T-cell (primary cell): ENCODE measurements at regions of chr7 and their contacts with region 1.

Region 1: GRCh38 chr7:29318853-29319718 is 124.5 kb downstream of the CHN2 start:
- DNase-seq: no peak
- ATAC-seq: no peak
- H3K4me3 ChIP-seq: no peak overlapping the region
- H3K4me3 Mint-ChIP-seq: no peak overlapping the region
- H3K27ac ChIP-seq: no peak overlapping the region
- H3K27ac Mint-ChIP-seq: no peak overlapping the region
- H3K4me1 ChIP-seq: no peaks in the 10 kb centered on the region
- H3K4me1 Mint-ChIP-seq: no peaks in the 10 kb centered on the region
- H3K27me3 ChIP-seq: no peaks in the 10 kb centered on the region
- H3K27me3 Mint-ChIP-seq: no peaks in the 10 kb centered on the region

Region 2: GRCh38 chr7:29105752-29106668 is 213.1 kb before region 1 on chr7:
- CTCF ChIA-PET with region 1: no interaction called
- POLR2A ChIA-PET with region 1: no interaction called
- DNase-seq: peak in 4 of 35 experiments; percentile 1 to 40 (median 14)
- ATAC-seq: peak in 2 of 4 experiments; percentile 46 to 64
- H3K4me3 ChIP-seq: no peak overlapping the region
- H3K4me3 Mint-ChIP-seq: no peak overlapping the region
- H3K27ac ChIP-seq: no peak overlapping the region
- H3K27ac Mint-ChIP-seq: no peak overlapping the region
- H3K4me1 ChIP-seq: no peaks in the 10 kb centered on the region
- H3K4me1 Mint-ChIP-seq: peaks cover 0 to 5% (median 2%) of the 10 kb centered on the region in 3 donors
- H3K27me3 ChIP-seq: no peaks in the 10 kb centered on the region
- H3K27me3 Mint-ChIP-seq: peaks cover 1 to 13% of the 10 kb centered on the region in 2 donors

Region 3: GRCh38 chr7:29337546-29338116 is 18.5 kb after region 1 on chr7:
- CTCF ChIA-PET with region 1: interaction called in 1 of 2 experiments, 16 read pairs
- POLR2A ChIA-PET with region 1: no interaction called
- DNase-seq: peak in 34 of 35 experiments; percentile 7 to 73 (median 41)
- ATAC-seq: peak; percentile 78 to 97 (median 91)
- H3K4me3 ChIP-seq: no peak overlapping the region
- H3K4me3 Mint-ChIP-seq: peak overlapping the region; percentile 37 to 56 (median 42)
- H3K27ac ChIP-seq: peak overlapping the region; percentile 51
- H3K27ac Mint-ChIP-seq: peak overlapping the region; percentile 43 to 75
- H3K4me1 ChIP-seq: peaks cover 27 to 35% of the 10 kb centered on the region in 2 experiments
- H3K4me1 Mint-ChIP-seq: peaks cover 29 to 40% (median 35%) of the 10 kb centered on the region in 3 donors
- H3K27me3 ChIP-seq: no peaks in the 10 kb centered on the region
- H3K27me3 Mint-ChIP-seq: no peaks in the 10 kb centered on the region